Heart right ventricle (tissue), 16 donors: ENCODE measurements at regions of chr6 and their contacts with region 1.

Region 1: DNA sequence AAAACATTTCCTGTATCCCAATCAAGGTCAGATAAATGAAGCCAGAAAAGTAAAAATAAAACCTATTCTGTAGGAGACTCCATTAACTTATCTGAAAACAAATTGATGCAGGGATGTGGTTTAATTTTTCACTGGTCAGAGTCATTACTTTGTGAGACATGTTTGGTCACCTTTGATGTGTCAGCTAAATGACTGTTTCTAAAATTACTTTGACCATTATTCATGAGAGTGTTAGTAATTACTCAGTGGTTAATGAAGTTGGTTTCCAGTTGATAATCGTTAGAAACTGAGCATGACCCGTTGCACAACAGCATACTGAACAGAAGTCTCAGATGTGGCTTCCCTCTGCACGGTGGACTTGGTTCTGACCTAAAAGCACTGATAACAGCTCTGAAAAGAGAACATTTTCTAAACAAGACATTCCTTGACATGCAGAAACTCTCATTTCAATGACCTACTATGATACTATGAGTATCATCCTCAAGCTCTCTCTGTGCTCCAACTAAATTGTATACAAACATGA is 410.5 kb upstream of the RNF217 start:
- DNase-seq: no peak
- ATAC-seq: no peak
- H3K4me3 ChIP-seq: no peak overlapping the region
- H3K27ac ChIP-seq: no peak overlapping the region
- H3K4me1 ChIP-seq: no peaks in the 10 kb centered on the region
- H3K27me3 ChIP-seq: no peaks in the 10 kb centered on the region
- CTCF ChIP-seq: no peak

Region 2: GRCh38 chr6:124496334-124496733 is 55.4 kb before region 1 on chr6:
- intact Hi-C with region 1: no loop called
- DNase-seq: no peak
- ATAC-seq: no peak
- H3K4me3 ChIP-seq: no peak overlapping the region
- H3K27ac ChIP-seq: no peak overlapping the region
- H3K4me1 ChIP-seq: no peaks in the 10 kb centered on the region
- H3K27me3 ChIP-seq: no peaks in the 10 kb centered on the region
- CTCF ChIP-seq: no peak

Region 3: DNA sequence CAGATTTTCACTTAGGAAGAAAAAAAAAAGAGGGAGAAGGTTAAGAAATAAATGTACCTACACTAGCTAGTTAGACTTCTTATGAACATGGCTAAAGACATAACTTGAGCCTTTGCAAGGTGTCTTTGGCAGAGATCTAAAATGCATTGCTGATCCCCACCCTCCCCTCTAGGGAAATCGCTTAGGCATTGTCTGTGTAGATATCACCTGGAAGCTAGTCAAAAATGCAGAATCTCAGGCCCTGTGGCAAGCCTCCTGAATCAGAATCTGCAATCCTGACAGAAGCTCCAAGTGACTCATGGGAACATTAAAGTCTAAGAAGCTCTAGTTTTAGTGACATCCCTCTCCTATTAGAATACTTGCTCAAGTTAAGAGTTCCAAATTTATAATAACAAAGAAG is 45.1 kb before region 1 on chr6:
- intact Hi-C with region 1: loop called in 1 of 10 experiments (anchors 1 kb)
- DNase-seq: no peak
- ATAC-seq: no peak
- H3K4me3 ChIP-seq: no peak overlapping the region
- H3K27ac ChIP-seq: no peak overlapping the region
- H3K4me1 ChIP-seq: no peaks in the 10 kb centered on the region
- H3K27me3 ChIP-seq: no peaks in the 10 kb centered on the region
- CTCF ChIP-seq: no peak